ENCODE measurements at regions of chr3 and their contacts with region 1.

Region 1: DNA sequence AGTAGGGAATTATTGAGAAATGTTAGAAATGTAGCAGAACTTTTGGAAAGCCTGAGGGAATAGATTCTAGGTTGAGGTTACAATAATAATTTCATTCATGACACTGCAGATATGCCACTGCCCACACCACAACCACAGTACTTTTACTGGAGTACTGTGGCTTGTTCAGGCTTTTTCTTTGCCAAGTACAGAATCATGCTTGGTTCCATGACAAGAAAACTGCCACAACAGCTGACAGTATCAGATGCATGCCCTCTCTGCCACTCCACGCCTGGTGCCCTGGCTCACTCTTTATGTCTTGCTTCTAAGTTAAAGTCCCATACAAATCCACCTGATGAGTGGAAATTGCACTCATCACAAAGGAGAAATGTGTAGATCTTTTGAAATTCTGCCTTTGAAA is 398.6 kb downstream of the ZIC1 start:
- DNase-seq: no peak
- H3K4me3 ChIP-seq: no peak overlapping the region
- H3K27ac ChIP-seq: no peak overlapping the region
- H3K27me3 ChIP-seq: no peaks in the 10 kb centered on the region
- CTCF ChIP-seq: no peak

Region 2: DNA sequence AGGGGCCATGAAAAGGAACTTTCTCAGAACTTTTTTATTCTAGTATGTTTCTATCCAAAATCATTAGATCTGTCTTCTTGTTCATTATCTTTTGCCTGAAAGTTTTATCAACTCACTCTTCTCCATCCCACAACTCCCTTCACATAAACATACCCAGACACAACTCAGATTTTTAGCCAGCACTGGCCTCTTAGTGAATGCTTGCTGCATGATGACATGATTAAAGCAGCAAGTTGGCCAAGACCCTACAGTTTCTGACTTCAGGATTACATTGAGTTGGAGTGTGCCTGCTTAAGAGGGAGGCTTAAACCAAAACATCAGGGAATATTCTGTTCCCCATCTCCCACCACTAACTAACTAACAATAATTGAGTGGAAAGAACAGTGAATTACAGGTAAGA is 1376.5 kb before region 1 on chr3:
- CTCF ChIA-PET with region 1: no interaction called
- POLR2A ChIA-PET with region 1: interaction called, 12 read pairs
- DNase-seq: peak; percentile 20
- H3K4me3 ChIP-seq: no peak overlapping the region
- H3K27ac ChIP-seq: no peak overlapping the region
- H3K27me3 ChIP-seq: no peaks in the 10 kb centered on the region
- CTCF ChIP-seq: no peak

Region 3: GRCh38 chr3:147945968-147946519 is 138.3 kb after region 1 on chr3:
- CTCF ChIA-PET with region 1: no interaction called
- POLR2A ChIA-PET with region 1: no interaction called
- DNase-seq: peak; percentile 88
- H3K4me3 ChIP-seq: peak overlapping the region; percentile 43
- H3K27ac ChIP-seq: peak overlapping the region; percentile 59
- H3K27me3 ChIP-seq: no peaks in the 10 kb centered on the region
- CTCF ChIP-seq: peak; percentile 90

Measured in AG04450 (cell line).